ENCODE measurements at regions of chr1 and their contacts with region 1.

Region 1: GRCh38 chr1:165630629-165631341 is at the start of gene MGST3:
- DNase-seq: peak; percentile 93
- H3K4me3 Mint-ChIP-seq: no peak within 1 kb of the TSS
- H3K27ac Mint-ChIP-seq: peak within 1 kb of the TSS; percentile 56
- H3K4me1 Mint-ChIP-seq: peaks cover 16% of the 10 kb centered on the region
- H3K27me3 Mint-ChIP-seq: peaks cover 10% of the 10 kb centered on the region
- total RNA-seq, gene MGST3: 63.4 to 70.3 TPM

Region 2: GRCh38 chr1:165645654-165646366 is 15.0 kb after region 1 on chr1:
- CTCF ChIA-PET with region 1: interaction called, 6 read pairs
- POLR2A ChIA-PET with region 1: interaction called, 19 read pairs
- DNase-seq: peak; percentile 58
- H3K4me3 Mint-ChIP-seq: peak overlapping the region; percentile 8
- H3K27ac Mint-ChIP-seq: peak overlapping the region; percentile 70
- H3K4me1 Mint-ChIP-seq: peaks cover 50% of the 10 kb centered on the region
- H3K27me3 Mint-ChIP-seq: no peaks in the 10 kb centered on the region

Measured in activated CD4-positive, alpha-beta memory T cell treated with anti-CD3 and anti-CD28 coated beads, Interleukin-2, amount 10 ng/mL, durations not matched to agents 7 days and 5 days (primary cell).